Posterior vena cava (tissue), 2 donors: ENCODE measurements at regions of chr3 and their contacts with region 1.

Region 1: DNA sequence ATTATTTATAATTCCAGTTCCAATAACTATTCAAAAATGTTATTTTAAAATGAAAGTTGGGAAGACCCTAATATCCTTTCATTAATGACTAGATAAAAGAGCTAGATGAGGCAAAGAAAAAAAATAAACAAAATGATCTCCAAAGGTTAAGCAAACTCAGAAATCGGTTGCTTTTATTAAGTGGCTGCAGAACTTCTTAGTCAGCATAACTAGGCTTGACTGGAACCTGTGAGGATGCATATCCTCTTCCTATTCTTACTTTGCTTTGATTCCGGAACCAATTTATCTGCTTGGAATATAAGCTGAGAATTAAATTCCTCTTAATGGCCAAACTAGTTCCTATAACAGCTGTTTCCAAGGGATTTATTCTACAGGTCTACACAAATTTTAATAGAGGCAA is 10.7 kb downstream of the GAP43 start:
- DNase-seq: no peak

Region 2: GRCh38 chr3:115602194-115602593 is 31.9 kb before region 1 on chr3:
- intact Hi-C with region 1: loop called in 1 of 2 experiments (anchors 1 kb)
- DNase-seq: no peak